ENCODE measurements at regions of chr15 and their contacts with region 1.

Region 1: GRCh38 chr15:25933456-25934158 is 70.5 kb upstream of the ATP10A start:
- DNase-seq: peak; percentile 88
- H3K4me3 ChIP-seq: peak overlapping the region in 3 of 4 donors; percentile 28 to 31 (median 28)
- H3K27ac ChIP-seq: peak overlapping the region in 2 of 4 donors; percentile 19 to 67
- H3K4me1 ChIP-seq: peaks cover 0 to 12% (median 5%) of the 10 kb centered on the region in 4 donors
- H3K27me3 ChIP-seq: no peaks in the 10 kb centered on the region
- CTCF ChIP-seq: peak; percentile 34 to 81 (median 49)
- EP300 ChIP-seq: no peak
- POLR2A ChIP-seq: no peak

Region 2: GRCh38 chr15:25508369-25509002 is 425.1 kb before region 1 on chr15:
- intact Hi-C with region 1: loop called (anchors 2 kb)
- DNase-seq: no peak
- H3K4me3 ChIP-seq: no peak overlapping the region
- H3K27ac ChIP-seq: no peak overlapping the region
- H3K4me1 ChIP-seq: no peaks in the 10 kb centered on the region
- H3K27me3 ChIP-seq: no peaks in the 10 kb centered on the region
- CTCF ChIP-seq: peak; percentile 40 to 79 (median 58)
- EP300 ChIP-seq: no peak
- POLR2A ChIP-seq: no peak

Region 3: GRCh38 chr15:25693321-25694237 is 240.0 kb before region 1 on chr15:
- intact Hi-C with region 1: loop called (anchors 5 kb)
- DNase-seq: peak; percentile 65
- H3K4me3 ChIP-seq: no peak overlapping the region
- H3K27ac ChIP-seq: no peak overlapping the region
- H3K4me1 ChIP-seq: peaks cover 0 to 8% (median 4%) of the 10 kb centered on the region in 4 donors
- H3K27me3 ChIP-seq: no peaks in the 10 kb centered on the region
- CTCF ChIP-seq: peak in 3 of 4 experiments; percentile 44 to 65 (median 62)
- EP300 ChIP-seq: no peak
- POLR2A ChIP-seq: no peak

Region 4: GRCh38 chr15:25739687-25740121 is 193.9 kb before region 1 on chr15:
- intact Hi-C with region 1: loop called (anchors 5 kb)
- DNase-seq: no peak
- H3K4me3 ChIP-seq: no peak overlapping the region
- H3K27ac ChIP-seq: peak overlapping the region in 2 of 4 donors; percentile 23 to 88
- H3K4me1 ChIP-seq: peaks cover 0 to 35% (median 30%) of the 10 kb centered on the region in 4 donors
- H3K27me3 ChIP-seq: no peaks in the 10 kb centered on the region
- CTCF ChIP-seq: peak in 2 of 4 experiments; percentile 31 to 33
- EP300 ChIP-seq: no peak
- POLR2A ChIP-seq: no peak

Region 5: DNA sequence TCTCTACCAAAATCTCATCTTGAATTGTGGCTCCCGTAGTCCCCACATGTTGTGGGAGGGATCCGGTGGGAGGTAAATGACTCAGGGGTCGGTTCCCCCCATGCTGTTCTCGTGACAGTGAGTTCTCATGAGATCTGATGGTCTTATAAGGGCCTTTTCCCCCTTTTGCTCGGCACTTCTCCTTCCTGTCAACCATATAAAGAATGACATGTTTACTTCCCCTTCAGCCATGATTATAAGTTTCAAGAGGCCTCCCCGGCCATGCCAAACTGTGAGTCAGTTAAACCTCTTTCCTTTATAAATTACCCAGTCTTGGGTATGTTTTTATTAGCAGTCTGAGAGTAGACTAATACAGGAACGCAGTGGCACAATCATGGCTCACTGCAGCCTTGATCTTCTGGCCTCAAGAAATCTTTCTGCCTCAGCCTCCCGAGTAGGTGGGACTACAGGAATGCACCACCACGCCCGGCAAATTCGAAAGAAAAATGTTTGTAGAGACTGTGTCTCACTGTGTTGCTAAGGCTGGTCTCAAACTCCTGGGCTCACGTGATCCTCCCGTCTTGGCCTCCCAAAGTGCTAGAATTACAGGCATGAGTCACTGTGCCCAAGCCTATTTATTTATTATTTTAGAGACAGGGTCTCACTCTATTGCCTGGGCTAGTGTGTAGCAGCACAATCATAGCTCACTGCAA is 171.5 kb before region 1 on chr15:
- intact Hi-C with region 1: no loop called
- DNase-seq: no peak
- H3K4me3 ChIP-seq: no peak overlapping the region
- H3K27ac ChIP-seq: no peak overlapping the region
- H3K4me1 ChIP-seq: no peaks in the 10 kb centered on the region
- H3K27me3 ChIP-seq: no peaks in the 10 kb centered on the region
- CTCF ChIP-seq: no peak
- EP300 ChIP-seq: no peak
- POLR2A ChIP-seq: no peak

Region 6: DNA sequence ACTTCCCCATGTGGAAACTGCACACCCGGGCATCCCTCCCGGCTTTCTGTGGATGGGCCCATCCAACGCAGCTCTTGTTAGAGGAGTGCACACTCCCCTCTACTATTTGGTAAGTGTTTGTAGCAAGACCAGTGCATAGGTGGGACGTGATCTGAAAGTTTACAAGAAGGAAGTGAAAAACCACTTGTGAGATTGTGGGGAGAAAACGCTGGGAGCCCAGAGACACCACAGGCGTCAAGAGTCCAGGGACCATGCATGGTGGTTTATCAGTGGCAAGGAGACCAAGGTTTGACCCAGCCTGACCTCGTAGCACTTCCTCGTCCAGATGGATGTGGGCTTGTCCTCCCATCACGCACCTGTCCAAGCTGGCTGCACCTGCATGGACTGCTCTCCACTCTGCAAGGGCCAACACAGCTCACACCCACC is 122.1 kb before region 1 on chr15:
- intact Hi-C with region 1: no loop called
- DNase-seq: no peak
- H3K4me3 ChIP-seq: no peak overlapping the region
- H3K27ac ChIP-seq: peak overlapping the region in 1 of 4 donors; percentile 23
- H3K4me1 ChIP-seq: no peaks in the 10 kb centered on the region
- H3K27me3 ChIP-seq: no peaks in the 10 kb centered on the region
- CTCF ChIP-seq: no peak
- EP300 ChIP-seq: no peak
- POLR2A ChIP-seq: no peak

Region 7: GRCh38 chr15:25863111-25863967 is 70.3 kb before region 1 on chr15 and contains the start of gene ATP10A:
- intact Hi-C with region 1: loop called (anchors 5 kb)
- DNase-seq: peak; percentile 74
- H3K4me3 ChIP-seq: peak within 1 kb of the TSS; percentile 41 to 68 (median 66)
- H3K27ac ChIP-seq: peak within 1 kb of the TSS; percentile 73 to 95 (median 84)
- H3K4me1 ChIP-seq: peaks cover 0 to 48% (median 42%) of the 10 kb centered on the region in 4 donors
- H3K27me3 ChIP-seq: no peaks in the 10 kb centered on the region
- CTCF ChIP-seq: no peak
- EP300 ChIP-seq: no peak
- POLR2A ChIP-seq: no peak
- total RNA-seq, gene ATP10A: 1.8 to 7.7 (median 5.0) TPM

Region 8: GRCh38 chr15:25971053-25971452 is 37.4 kb after region 1 on chr15:
- intact Hi-C with region 1: no loop called
- DNase-seq: no peak
- H3K4me3 ChIP-seq: no peak overlapping the region
- H3K27ac ChIP-seq: peak overlapping the region in 3 of 4 donors; percentile 63 to 71 (median 65)
- H3K4me1 ChIP-seq: peaks cover 0 to 38% (median 22%) of the 10 kb centered on the region in 4 donors
- H3K27me3 ChIP-seq: no peaks in the 10 kb centered on the region
- CTCF ChIP-seq: no peak
- EP300 ChIP-seq: peak in 1 of 4 donors; percentile 74
- POLR2A ChIP-seq: no peak